Prostate gland (tissue), 2 donors: ENCODE measurements at regions of chr10 and their contacts with region 1.

Region 1: GRCh38 chr10:15106352-15107013 is 9.3 kb downstream of the RPP38 start:
- DNase-seq: peak; percentile 74
- H3K4me3 ChIP-seq: no peak overlapping the region
- H3K27ac ChIP-seq: no peak overlapping the region
- H3K4me1 ChIP-seq: no peaks in the 10 kb centered on the region
- H3K27me3 ChIP-seq: no peaks in the 10 kb centered on the region
- CTCF ChIP-seq: peak; percentile 74 to 88 (median 86)
- POLR2A ChIP-seq: no peak

Region 2: DNA sequence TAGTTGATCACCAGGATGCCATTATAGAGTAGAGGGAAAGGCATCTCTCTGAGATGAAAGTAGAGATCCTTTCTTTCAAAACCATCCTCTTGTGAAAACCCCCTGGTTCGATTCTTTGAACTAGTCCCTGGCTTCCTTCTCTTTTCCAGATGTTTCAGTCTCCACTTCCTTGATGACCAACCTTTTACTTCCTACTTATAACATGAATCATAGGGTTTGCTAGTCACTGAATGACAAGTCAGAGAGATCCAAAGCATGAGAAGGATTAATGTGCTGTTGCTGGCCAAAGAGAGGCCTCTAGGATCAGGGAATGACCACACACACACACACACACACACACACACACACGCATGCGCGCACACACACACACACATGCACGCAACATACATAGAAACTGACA is 614.7 kb before region 1 on chr10:
- intact Hi-C with region 1: loop called (anchors 10 kb)
- DNase-seq: no peak
- H3K4me3 ChIP-seq: no peak overlapping the region
- H3K27ac ChIP-seq: no peak overlapping the region
- H3K4me1 ChIP-seq: no peaks in the 10 kb centered on the region
- H3K27me3 ChIP-seq: no peaks in the 10 kb centered on the region
- CTCF ChIP-seq: no peak
- POLR2A ChIP-seq: no peak

Region 3: GRCh38 chr10:15168781-15169554 is 62.5 kb after region 1 on chr10:
- intact Hi-C with region 1: loop called (anchors 10 kb)
- DNase-seq: peak; percentile 98
- H3K4me3 ChIP-seq: no peak overlapping the region
- H3K27ac ChIP-seq: no peak overlapping the region
- H3K4me1 ChIP-seq: no peaks in the 10 kb centered on the region
- H3K27me3 ChIP-seq: no peaks in the 10 kb centered on the region
- CTCF ChIP-seq: no peak
- POLR2A ChIP-seq: peak; percentile 53